Caco-2 (cell line): ENCODE measurements at regions of chr10 and their contacts with region 1.

Region 1: DNA sequence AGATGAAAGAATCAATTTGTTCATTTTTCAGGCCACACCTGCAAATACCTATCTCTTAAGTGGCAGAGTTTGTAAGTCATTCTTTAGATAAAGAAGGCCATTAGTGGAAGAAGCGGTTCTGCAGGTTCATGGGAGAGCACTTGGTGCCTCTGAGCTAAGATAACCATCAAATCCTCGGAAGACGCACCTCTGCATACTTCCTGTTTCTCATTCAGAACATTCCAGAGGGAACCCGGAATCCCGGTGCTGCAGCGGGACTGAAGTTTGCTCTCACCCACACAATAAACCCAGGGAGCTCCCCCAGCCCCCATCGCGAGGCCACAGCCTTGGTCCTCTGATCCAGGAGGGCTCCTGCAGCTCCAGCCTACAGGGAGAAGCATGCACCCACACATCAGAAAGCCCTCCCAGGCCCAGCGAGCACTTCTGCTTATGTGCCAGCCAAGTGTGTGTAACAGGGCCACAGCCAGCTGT is 142.5 kb downstream of the DIP2C start:
- DNase-seq: peak; percentile 91 to 95
- H3K4me3 ChIP-seq: peak overlapping the region; percentile 0; the same call in 1 of the 2 replicates
- H3K4me3 Mint-ChIP-seq: peak overlapping the region; percentile 63
- H3K27ac Mint-ChIP-seq: peak overlapping the region; percentile 92
- H3K4me1 ChIP-seq: peaks cover 45% of the 10 kb centered on the region
- H3K4me1 Mint-ChIP-seq: peaks cover 35% of the 10 kb centered on the region
- H3K27me3 ChIP-seq: no peaks in the 10 kb centered on the region
- H3K27me3 Mint-ChIP-seq: no peaks in the 10 kb centered on the region
- CTCF ChIP-seq: no peak

Region 2: GRCh38 chr10:484441-484924 is 62.5 kb before region 1 on chr10:
- CTCF ChIA-PET with region 1: no interaction called
- POLR2A ChIA-PET with region 1: no interaction called
- intact Hi-C with region 1: no loop called
- DNase-seq: no peak
- H3K4me3 ChIP-seq: no peak overlapping the region
- H3K4me3 Mint-ChIP-seq: no peak overlapping the region
- H3K27ac Mint-ChIP-seq: no peak overlapping the region
- H3K4me1 ChIP-seq: no peaks in the 10 kb centered on the region
- H3K4me1 Mint-ChIP-seq: no peaks in the 10 kb centered on the region
- H3K27me3 ChIP-seq: no peaks in the 10 kb centered on the region
- H3K27me3 Mint-ChIP-seq: no peaks in the 10 kb centered on the region
- CTCF ChIP-seq: no peak

Region 3: DNA sequence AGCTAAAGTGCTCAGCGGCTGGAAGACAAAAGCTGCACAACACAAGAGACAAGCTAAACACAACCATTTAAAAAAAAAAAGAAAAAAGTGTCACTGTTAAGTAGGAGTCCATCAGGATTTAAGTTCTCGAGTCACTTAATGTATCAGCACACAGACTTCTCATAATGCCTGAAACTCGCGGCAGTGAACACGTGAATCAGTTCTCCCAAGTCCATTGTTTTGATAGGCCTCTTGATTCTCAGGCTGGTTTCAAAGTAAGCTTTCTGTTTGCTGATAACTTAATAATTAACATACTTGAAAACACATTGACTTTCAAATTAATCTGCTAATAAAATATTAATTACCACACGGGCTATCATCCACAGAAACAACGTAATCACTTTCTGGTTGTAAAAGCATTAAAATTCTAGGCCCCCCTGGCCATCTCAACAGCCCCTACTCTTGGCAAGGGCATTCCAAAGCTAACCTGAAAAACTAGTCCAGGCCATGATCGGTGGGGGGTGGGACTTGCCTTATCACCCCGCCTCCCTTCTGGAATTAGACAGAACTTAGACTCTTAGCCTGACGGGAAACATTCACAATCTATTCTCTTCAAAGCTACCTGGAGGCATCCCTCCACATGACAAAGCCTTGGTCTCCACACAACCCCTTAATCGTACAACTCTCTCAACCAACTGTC is 13.5 kb after region 1 on chr10:
- CTCF ChIA-PET with region 1: no interaction called
- POLR2A ChIA-PET with region 1: interaction called, 7 read pairs
- intact Hi-C with region 1: loop called (anchors 1 kb)
- DNase-seq: peak in 1 of 2 experiments; percentile 61
- H3K4me3 ChIP-seq: no peak overlapping the region
- H3K4me3 Mint-ChIP-seq: no peak overlapping the region
- H3K27ac Mint-ChIP-seq: peak overlapping the region; percentile 67
- H3K4me1 ChIP-seq: peaks cover 28% of the 10 kb centered on the region
- H3K4me1 Mint-ChIP-seq: peaks cover 26% of the 10 kb centered on the region
- H3K27me3 ChIP-seq: no peaks in the 10 kb centered on the region
- H3K27me3 Mint-ChIP-seq: no peaks in the 10 kb centered on the region
- CTCF ChIP-seq: no peak

Region 4: GRCh38 chr10:613271-614138 is 66.5 kb after region 1 on chr10:
- CTCF ChIA-PET with region 1: no interaction called
- POLR2A ChIA-PET with region 1: no interaction called
- intact Hi-C with region 1: loop called (anchors 1 kb)
- DNase-seq: peak; percentile 76 to 84
- H3K4me3 ChIP-seq: no peak overlapping the region
- H3K4me3 Mint-ChIP-seq: peak overlapping the region; percentile 17
- H3K27ac Mint-ChIP-seq: peak overlapping the region; percentile 82
- H3K4me1 ChIP-seq: peaks cover 19% of the 10 kb centered on the region
- H3K4me1 Mint-ChIP-seq: peaks cover 31% of the 10 kb centered on the region
- H3K27me3 ChIP-seq: no peaks in the 10 kb centered on the region
- H3K27me3 Mint-ChIP-seq: no peaks in the 10 kb centered on the region
- CTCF ChIP-seq: no peak

Region 5: DNA sequence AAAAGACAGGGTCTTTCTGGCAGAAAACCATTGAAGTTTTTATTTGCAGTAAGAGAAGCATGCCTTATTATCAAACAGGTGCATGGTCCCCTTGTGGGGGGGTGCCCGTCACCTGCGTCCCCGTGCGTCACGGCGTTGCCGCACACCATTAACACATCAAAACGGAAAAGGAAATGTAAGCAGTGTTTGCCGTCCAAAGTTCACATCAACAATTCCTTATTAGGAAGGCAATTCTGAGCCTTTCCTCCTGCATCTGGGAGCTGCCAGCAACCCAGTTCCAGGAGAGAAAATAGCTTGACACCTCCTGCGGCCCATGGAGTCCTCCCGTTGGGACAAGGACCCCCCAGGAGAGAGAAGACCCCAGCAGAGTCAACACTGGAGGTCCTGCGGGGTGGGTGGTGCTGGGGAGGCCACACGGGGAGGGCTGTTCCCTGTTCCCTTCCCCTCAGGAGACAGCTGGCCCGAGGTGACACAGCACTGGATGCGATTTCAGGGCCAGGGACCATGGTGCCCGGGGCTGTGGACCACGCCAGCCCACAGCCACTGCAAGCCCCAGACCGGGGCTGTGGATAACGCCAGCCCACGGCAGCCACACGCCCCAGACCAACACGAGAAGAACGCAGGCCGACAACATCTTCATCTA is 103.0 kb after region 1 on chr10:
- CTCF ChIA-PET with region 1: interaction called, 3 read pairs
- POLR2A ChIA-PET with region 1: interaction called, 3 read pairs
- intact Hi-C with region 1: loop called (anchors 1 kb)
- DNase-seq: peak; percentile 87 to 89
- H3K4me3 ChIP-seq: peak overlapping the region; percentile 53
- H3K4me3 Mint-ChIP-seq: peak overlapping the region; percentile 66
- H3K27ac Mint-ChIP-seq: no peak overlapping the region
- H3K4me1 ChIP-seq: peaks cover 25% of the 10 kb centered on the region
- H3K4me1 Mint-ChIP-seq: peaks cover 17% of the 10 kb centered on the region
- H3K27me3 ChIP-seq: no peaks in the 10 kb centered on the region
- H3K27me3 Mint-ChIP-seq: no peaks in the 10 kb centered on the region
- CTCF ChIP-seq: no peak